ENCODE measurements at regions of chr7 and their contacts with region 1.

Region 1: DNA sequence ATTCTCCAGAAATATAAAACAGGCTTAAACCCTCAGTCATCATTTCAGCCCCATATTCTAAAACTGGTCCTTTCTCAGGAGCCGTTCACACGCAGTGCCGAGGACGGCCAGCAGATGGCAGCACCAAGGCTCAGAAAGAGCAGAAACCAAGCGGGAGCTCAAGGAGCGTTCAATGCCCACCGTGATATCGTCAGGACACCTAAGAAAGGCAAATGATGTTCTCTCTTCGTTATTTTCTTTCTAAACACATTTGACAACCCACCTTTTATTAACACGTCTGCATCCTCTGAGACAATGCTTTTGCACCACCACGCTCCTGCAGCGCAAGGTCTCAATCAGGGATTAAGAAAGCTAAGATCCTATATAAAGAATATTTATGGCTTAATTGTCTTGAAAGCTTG is 45.7 kb upstream of the RBM33 start:
- DNase-seq: peak; percentile 95
- H3K4me3 ChIP-seq: no peak overlapping the region
- H3K27ac ChIP-seq: no peak overlapping the region
- H3K4me1 ChIP-seq: no peaks in the 10 kb centered on the region
- H3K27me3 ChIP-seq: no peaks in the 10 kb centered on the region
- CTCF ChIP-seq: peak; percentile 86 to 97 (median 89)
- POLR2A ChIP-seq: no peak

Region 2: DNA sequence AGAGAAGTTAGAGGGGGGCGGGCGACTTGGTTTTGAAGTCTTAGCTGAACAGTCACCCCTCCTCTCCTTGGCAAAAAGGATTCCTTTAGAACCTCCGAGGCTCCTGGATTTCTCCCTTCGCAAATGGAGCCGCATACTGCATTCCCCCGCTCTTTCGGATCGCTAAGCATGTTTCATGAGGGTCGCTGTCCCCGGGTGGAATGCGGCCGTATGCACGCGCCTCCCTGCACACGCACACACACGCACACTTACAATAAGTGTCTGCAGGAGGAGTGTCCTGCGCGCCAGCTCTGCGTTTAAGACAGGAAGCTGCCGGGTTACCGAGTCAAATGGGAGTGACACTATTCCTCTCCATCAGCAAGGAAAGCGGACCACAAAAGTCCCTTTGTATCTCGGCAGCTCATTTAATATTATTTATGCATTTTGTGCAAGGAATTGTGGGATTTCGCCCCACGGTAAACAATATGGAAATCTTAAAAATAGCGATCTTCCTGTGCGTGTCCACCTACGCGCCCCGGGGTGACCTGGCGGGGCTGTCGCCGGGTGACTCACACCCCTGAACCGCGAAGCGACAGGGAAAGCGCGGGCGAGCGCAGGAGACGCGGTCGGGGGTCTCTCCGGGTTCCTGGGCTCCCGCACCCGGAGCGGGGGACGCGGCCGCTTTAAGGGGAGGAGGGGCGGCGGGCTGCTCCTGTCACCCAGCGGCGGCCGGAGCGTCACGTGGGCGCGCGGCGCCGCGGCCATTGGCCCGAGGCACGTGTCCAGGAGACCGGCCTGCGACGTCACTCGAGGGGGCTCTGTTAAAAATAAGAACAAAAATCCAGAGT is 141.9 kb before region 1 on chr7:
- intact Hi-C with region 1: no loop called
- DNase-seq: peak; percentile 81
- H3K4me3 ChIP-seq: peak overlapping the region; percentile 22 to 54
- H3K27ac ChIP-seq: no peak overlapping the region
- H3K4me1 ChIP-seq: peaks cover 22% of the 10 kb centered on the region
- H3K27me3 ChIP-seq: peaks cover 7% of the 10 kb centered on the region
- CTCF ChIP-seq: peak in 1 of 3 experiments; percentile 11
- POLR2A ChIP-seq: no peak

Region 3: GRCh38 chr7:155769701-155770100 is 170.9 kb after region 1 on chr7:
- intact Hi-C with region 1: loop called (anchors 10 kb)
- DNase-seq: no peak
- H3K4me3 ChIP-seq: no peak overlapping the region
- H3K27ac ChIP-seq: no peak overlapping the region
- H3K4me1 ChIP-seq: no peaks in the 10 kb centered on the region
- H3K27me3 ChIP-seq: no peaks in the 10 kb centered on the region
- CTCF ChIP-seq: no peak
- POLR2A ChIP-seq: no peak